Esophagus muscularis mucosa (tissue), 4 donors: ENCODE measurements at regions of chr1 and their contacts with region 1.

Region 1: DNA sequence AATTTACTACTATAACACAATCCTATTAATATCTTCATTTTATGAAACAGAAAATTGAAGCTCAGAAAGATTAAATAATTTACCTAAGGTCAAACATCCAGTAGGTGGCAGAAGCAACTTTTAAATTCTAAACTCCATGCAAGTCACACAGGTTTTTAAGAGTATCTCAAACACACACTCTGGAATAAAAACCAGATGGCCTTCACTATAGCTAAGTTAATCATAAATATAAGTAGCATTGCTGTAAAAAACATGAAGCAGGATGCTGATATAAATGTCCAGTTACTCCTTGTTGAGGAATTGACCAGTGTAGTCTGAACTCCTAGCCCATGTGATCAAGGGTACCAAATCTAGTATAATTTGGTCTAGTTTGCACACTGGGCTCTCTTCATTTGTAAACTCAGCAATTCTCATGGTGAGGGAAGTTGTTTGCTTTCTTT is 9.4 kb upstream of the FMO3 start:
- DNase-seq: no peak
- H3K4me3 ChIP-seq: no peak overlapping the region
- H3K27ac ChIP-seq: peak overlapping the region; percentile 40 to 63 (median 46)
- H3K4me1 ChIP-seq: peaks cover 9 to 14% (median 11%) of the 10 kb centered on the region in 4 donors
- H3K27me3 ChIP-seq: no peaks in the 10 kb centered on the region
- CTCF ChIP-seq: peak; percentile 38 to 55 (median 54)
- EP300 ChIP-seq: no peak
- POLR2A ChIP-seq: no peak

Region 2: DNA sequence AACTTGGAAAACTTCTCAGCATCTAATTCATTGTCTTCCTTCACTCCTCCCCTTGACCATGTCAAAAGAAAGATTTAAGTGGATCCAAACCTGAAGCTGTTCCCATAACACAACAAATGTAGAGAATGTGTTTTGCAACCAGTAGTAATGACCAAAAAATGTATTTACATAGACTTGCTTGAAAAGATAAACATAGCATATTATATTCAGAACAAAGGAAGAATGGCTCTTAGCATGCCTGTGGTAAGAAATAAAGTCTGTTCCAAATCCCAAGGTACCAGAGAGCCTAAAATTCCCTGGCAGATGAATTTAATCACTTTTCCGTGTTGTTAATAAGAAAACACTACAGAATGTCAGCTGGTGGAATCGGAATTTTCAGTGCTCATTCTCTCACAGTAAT is 46.2 kb after region 1 on chr1:
- intact Hi-C with region 1: no loop called
- DNase-seq: no peak
- H3K4me3 ChIP-seq: no peak overlapping the region
- H3K27ac ChIP-seq: peak overlapping the region in 3 of 4 donors; percentile 34 to 60 (median 51)
- H3K4me1 ChIP-seq: peaks cover 26 to 38% (median 31%) of the 10 kb centered on the region in 4 donors
- H3K27me3 ChIP-seq: no peaks in the 10 kb centered on the region
- CTCF ChIP-seq: no peak
- EP300 ChIP-seq: no peak
- POLR2A ChIP-seq: no peak

Region 3: DNA sequence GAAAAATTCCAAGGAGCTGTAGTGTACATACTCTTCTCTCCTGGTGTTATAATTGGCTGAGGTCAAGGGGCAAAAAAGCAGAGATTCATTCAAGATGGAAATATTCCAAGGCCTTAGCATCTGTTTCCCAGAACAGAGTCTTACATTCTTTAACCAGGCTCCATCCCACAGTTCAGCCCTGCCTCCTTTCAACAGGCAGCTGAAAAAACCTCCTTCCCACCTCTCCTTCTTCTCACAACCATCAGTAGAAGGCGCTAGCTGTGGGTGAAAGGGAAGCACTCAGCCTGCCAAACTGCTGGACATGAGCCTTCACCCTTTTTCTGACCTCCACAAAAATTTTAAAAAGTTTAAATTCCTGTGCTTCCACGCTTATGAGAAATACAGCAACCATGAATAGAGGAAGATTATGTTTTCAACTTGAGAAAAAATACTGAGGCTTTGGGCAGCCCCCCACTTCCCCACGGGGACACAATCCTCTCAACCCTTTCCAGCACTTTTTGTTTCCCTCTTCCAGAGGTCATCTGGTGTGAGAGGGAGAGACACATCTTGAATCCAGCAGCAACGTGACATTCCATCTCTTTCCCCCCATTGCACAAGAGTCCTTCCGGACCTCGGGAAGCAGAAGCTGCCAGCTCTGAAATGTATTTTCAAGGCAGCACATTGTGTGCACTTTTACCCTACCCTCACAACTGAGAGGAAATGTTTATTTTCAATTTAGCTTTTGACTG is 60.5 kb after region 1 on chr1:
- intact Hi-C with region 1: no loop called
- DNase-seq: peak; percentile 93
- H3K4me3 ChIP-seq: peak overlapping the region in 1 of 4 donors; percentile 11
- H3K27ac ChIP-seq: peak overlapping the region; percentile 77 to 86 (median 82)
- H3K4me1 ChIP-seq: peaks cover 35 to 64% (median 51%) of the 10 kb centered on the region in 4 donors
- H3K27me3 ChIP-seq: no peaks in the 10 kb centered on the region
- CTCF ChIP-seq: no peak
- EP300 ChIP-seq: peak; percentile 59
- POLR2A ChIP-seq: no peak

Region 4: DNA sequence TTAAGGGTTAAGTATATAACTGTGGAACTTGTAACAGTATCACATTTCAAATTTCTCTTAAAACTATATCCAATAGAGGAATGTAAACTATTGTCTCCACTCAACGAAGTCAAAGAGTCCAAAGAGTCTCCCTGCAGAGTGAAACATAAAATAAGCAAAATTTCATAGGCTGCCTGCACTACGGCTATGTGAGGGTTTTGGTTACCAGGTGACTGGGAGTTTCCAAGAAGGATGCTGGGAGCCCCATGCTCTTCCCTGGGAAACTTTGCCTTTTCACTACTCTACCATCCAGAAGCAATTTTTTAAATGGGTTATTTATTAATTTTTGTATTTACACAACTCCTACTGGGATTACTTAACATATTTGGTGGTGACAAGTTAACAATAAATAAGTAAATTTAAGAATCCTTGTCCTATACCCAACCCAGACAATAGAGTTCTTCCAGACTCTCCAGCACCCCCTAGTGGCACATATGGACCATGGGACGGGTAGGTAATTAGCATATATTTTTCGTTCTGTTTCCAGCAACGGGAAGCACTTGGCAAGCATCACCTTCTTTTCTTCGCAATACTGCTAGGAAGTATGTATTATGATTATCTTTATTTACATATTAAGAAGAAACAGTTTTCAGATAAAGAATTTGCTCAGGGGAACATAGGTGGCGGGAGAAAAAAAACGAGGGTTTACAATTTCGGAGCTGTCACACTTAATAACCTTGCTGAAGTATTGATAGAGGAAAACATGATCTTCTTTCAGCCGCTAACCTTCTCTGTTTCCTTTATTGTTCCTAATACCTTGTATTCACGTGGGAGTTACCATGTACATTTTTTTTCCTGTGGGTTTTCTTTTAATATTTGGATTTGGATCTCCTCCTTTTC is 107.3 kb after region 1 on chr1:
- intact Hi-C with region 1: loop called (anchors 5 kb)
- DNase-seq: no peak
- H3K4me3 ChIP-seq: peak overlapping the region; percentile 21 to 56 (median 47)
- H3K27ac ChIP-seq: no peak overlapping the region
- H3K4me1 ChIP-seq: peaks cover 9 to 42% (median 21%) of the 10 kb centered on the region in 4 donors
- H3K27me3 ChIP-seq: no peaks in the 10 kb centered on the region
- CTCF ChIP-seq: peak; percentile 55 to 79 (median 60)
- EP300 ChIP-seq: no peak
- POLR2A ChIP-seq: no peak